CD4-positive, alpha-beta memory T cell (primary cell): ENCODE measurements at regions of chr3 and their contacts with region 1.

Region 1: GRCh38 chr3:48847504-48848423 is at the start of gene PRKAR2A:
- DNase-seq: peak; percentile 69 to 82 (median 76)
- H3K4me3 ChIP-seq: peak within 1 kb of the TSS; percentile 69 to 89
- H3K4me3 Mint-ChIP-seq: peak within 1 kb of the TSS; percentile 85 to 91 (median 89)
- H3K27ac ChIP-seq: peak within 1 kb of the TSS; percentile 74
- H3K27ac Mint-ChIP-seq: peak within 1 kb of the TSS; percentile 94 to 98 (median 97)
- H3K4me1 ChIP-seq: peaks cover 33% of the 10 kb centered on the region
- H3K4me1 Mint-ChIP-seq: peaks cover 19 to 39% (median 29%) of the 10 kb centered on the region in 4 donors
- H3K27me3 ChIP-seq: no peaks in the 10 kb centered on the region
- H3K27me3 Mint-ChIP-seq: no peaks in the 10 kb centered on the region
- total RNA-seq, gene PRKAR2A: 41.7 to 45.0 TPM

Region 2: DNA sequence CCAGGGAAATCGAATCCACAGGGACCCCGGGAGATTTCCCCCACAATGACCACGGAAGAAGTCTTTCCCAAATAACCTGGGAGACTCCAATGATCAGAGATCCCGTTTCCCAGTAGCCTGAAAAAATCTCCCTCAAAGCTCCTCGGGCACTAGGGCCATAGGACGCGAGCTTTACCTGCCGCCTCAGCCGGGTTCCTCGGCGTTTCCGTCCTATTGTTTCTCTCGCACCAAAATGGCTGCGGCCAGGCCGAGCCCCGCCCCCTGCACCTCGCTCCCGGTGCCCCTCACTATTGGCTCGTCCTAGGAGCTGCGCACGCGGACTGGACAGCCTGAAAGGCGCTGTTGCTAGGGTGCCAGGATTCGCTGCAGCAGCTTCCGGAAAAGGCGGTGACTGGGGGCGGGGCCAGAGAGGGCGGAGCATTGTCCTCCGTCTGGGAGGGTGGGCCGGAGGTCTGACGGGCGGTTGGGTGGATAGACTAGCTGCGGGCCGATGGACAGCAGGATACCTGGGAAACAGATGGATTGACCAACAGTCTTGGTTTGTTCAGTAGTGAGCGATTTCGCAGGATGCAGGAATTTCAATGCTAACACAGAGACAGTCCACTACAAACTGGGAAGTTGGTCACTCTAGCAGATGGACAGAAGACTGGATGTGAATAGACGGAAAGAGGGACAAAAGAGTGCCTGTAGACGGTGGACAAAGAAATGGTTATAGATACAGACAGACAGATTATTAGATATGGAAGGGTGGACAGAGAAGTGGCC is 130.6 kb before region 1 on chr3 and contains the start of gene IP6K2:
- CTCF ChIA-PET with region 1: no interaction called
- POLR2A ChIA-PET with region 1: interaction called, 6 read pairs
- intact Hi-C with region 1: loop called (anchors 5 kb)
- DNase-seq: peak; percentile 95 to 99 (median 97)
- H3K4me3 ChIP-seq: peak within 1 kb of the TSS; percentile 90 to 98
- H3K4me3 Mint-ChIP-seq: peak within 1 kb of the TSS; percentile 98 to 100 (median 99)
- H3K27ac ChIP-seq: peak within 1 kb of the TSS; percentile 91
- H3K27ac Mint-ChIP-seq: peak within 1 kb of the TSS; percentile 88 to 99 (median 99)
- H3K4me1 ChIP-seq: peaks cover 44% of the 10 kb centered on the region
- H3K4me1 Mint-ChIP-seq: peaks cover 28 to 51% (median 37%) of the 10 kb centered on the region in 4 donors
- H3K27me3 ChIP-seq: no peaks in the 10 kb centered on the region
- H3K27me3 Mint-ChIP-seq: no peaks in the 10 kb centered on the region
- total RNA-seq, gene IP6K2: 84.5 to 91.8 TPM

Region 3: DNA sequence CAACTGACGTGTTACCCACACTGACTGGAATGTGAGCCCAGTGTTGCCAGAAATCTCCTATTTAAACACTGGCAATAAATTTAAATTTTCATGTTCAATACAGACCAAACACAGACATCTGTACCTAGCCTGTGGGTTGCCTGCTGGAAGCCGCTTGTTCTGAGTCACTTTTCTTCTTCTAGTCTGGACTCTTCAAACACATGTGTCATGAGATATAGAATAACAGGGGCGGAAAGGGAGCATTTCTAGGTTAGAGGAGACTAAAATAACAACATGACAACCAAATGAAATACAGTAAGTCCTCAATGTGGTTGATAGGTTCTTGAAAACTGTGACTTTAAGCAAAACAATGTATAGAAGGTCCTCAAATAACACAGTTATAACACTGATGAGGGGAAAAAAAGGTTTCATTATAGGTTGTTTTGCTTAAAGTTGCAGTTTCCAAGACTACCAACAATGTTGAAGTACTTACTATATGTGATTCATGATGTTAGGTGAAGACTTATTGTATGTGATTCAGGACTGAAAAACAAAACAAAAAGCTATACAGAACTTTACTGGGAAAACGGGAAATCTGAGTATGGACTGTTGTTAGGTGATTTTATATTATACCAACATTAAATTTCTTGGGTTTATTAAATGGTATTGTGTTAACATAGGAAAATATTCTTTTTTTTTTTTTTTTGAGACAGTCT is 63.2 kb before region 1 on chr3:
- CTCF ChIA-PET with region 1: no interaction called
- POLR2A ChIA-PET with region 1: interaction called, 6 read pairs
- intact Hi-C with region 1: loop called (anchors 2 kb)
- DNase-seq: no peak
- H3K4me3 ChIP-seq: no peak overlapping the region
- H3K4me3 Mint-ChIP-seq: no peak overlapping the region
- H3K27ac ChIP-seq: no peak overlapping the region
- H3K27ac Mint-ChIP-seq: peak overlapping the region in 3 of 7 donors; percentile 19 to 43 (median 37)
- H3K4me1 ChIP-seq: peaks cover 11% of the 10 kb centered on the region
- H3K4me1 Mint-ChIP-seq: peaks cover 11 to 15% (median 13%) of the 10 kb centered on the region in 4 donors
- H3K27me3 ChIP-seq: no peaks in the 10 kb centered on the region
- H3K27me3 Mint-ChIP-seq: no peaks in the 10 kb centered on the region

Region 4: DNA sequence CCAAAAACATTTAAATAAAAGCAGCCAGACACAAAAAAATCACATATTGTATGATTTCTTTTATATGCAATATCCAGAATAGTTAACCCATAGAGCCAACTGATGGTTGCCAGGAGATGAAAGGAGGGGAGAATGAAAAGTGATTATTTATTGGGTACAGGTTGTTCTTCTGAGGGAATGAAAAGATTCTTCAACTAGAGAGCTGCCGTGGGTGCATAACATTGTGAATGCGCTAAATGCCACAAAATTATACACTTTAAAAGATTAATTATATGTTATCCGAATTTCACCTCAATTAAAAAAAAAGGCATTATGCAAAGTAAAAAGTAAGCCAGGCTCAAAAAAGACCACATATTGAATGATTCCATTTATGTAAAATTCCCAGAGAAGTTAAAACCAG is 36.2 kb before region 1 on chr3:
- CTCF ChIA-PET with region 1: interaction called, 3 read pairs
- POLR2A ChIA-PET with region 1: interaction called, 33 read pairs
- intact Hi-C with region 1: loop called (anchors 1 kb)
- DNase-seq: no peak
- H3K4me3 ChIP-seq: no peak overlapping the region
- H3K4me3 Mint-ChIP-seq: peak overlapping the region in 4 of 8 donors; percentile 4 to 55 (median 12)
- H3K27ac ChIP-seq: peak overlapping the region; percentile 21
- H3K27ac Mint-ChIP-seq: peak overlapping the region; percentile 62 to 95 (median 92)
- H3K4me1 ChIP-seq: peaks cover 32% of the 10 kb centered on the region
- H3K4me1 Mint-ChIP-seq: peaks cover 19 to 38% (median 29%) of the 10 kb centered on the region in 4 donors
- H3K27me3 ChIP-seq: no peaks in the 10 kb centered on the region
- H3K27me3 Mint-ChIP-seq: no peaks in the 10 kb centered on the region

Region 5: GRCh38 chr3:49626101-49626581 is 778.4 kb after region 1 on chr3:
- CTCF ChIA-PET with region 1: no interaction called
- POLR2A ChIA-PET with region 1: no interaction called
- intact Hi-C with region 1: no loop called
- DNase-seq: no peak
- H3K4me3 ChIP-seq: no peak overlapping the region
- H3K4me3 Mint-ChIP-seq: no peak overlapping the region
- H3K27ac ChIP-seq: no peak overlapping the region
- H3K27ac Mint-ChIP-seq: no peak overlapping the region
- H3K4me1 ChIP-seq: no peaks in the 10 kb centered on the region
- H3K4me1 Mint-ChIP-seq: no peaks in the 10 kb centered on the region
- H3K27me3 ChIP-seq: no peaks in the 10 kb centered on the region
- H3K27me3 Mint-ChIP-seq: peaks cover 0 to 5% of the 10 kb centered on the region in 2 donors